MCF 10A (cell line): ENCODE measurements at regions of chr18 and their contacts with region 1.

Region 1: DNA sequence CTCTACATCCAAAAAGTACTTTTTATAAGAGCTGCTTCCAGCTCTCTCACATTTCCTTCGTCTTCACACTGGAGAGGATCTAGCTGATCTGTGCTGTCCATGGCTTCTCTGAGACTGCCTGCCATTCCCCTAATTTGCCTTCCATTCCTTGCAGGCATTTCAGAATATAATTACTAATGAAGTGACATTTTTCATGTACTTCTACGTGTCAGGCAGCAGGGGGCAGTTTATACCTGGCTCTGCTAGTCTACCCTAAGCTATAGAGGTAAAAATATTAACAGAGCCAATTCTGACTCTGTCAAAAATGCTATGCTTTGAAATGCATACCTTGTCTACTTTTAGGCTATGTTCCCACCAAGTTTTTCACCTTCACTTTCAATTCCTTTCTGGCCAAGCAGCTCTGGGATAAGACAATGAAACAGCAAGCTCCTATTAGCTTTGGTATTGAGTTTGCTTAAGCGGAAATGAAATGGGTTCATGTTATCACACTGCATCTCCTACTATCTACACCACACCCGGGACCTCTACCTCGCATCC is 81.9 kb downstream of the MEP1B start:
- DNase-seq: peak; percentile 57
- H3K4me3 Mint-ChIP-seq: no peak overlapping the region
- H3K27ac Mint-ChIP-seq: no peak overlapping the region
- H3K4me1 Mint-ChIP-seq: peaks cover 12% of the 10 kb centered on the region
- H3K27me3 Mint-ChIP-seq: no peaks in the 10 kb centered on the region
- CTCF ChIP-seq: peak; percentile 76

Region 2: GRCh38 chr18:32158108-32158624 is 113.6 kb before region 1 on chr18:
- CTCF ChIA-PET with region 1: interaction called, 80 read pairs
- POLR2A ChIA-PET with region 1: no interaction called
- intact Hi-C with region 1: loop called (anchors 2 kb)
- DNase-seq: peak; percentile 92
- H3K4me3 Mint-ChIP-seq: no peak overlapping the region
- H3K27ac Mint-ChIP-seq: no peak overlapping the region
- H3K4me1 Mint-ChIP-seq: peaks cover 4% of the 10 kb centered on the region
- H3K27me3 Mint-ChIP-seq: no peaks in the 10 kb centered on the region
- CTCF ChIP-seq: peak; percentile 76

Region 3: GRCh38 chr18:32295604-32296003 is 23.9 kb after region 1 on chr18:
- CTCF ChIA-PET with region 1: interaction called, 100 read pairs
- POLR2A ChIA-PET with region 1: interaction called, 3 read pairs
- intact Hi-C with region 1: no loop called
- DNase-seq: no peak
- H3K4me3 Mint-ChIP-seq: no peak overlapping the region
- H3K27ac Mint-ChIP-seq: no peak overlapping the region
- H3K4me1 Mint-ChIP-seq: peaks cover 18% of the 10 kb centered on the region
- H3K27me3 Mint-ChIP-seq: no peaks in the 10 kb centered on the region
- CTCF ChIP-seq: no peak

Region 4: GRCh38 chr18:32373995-32374394 is 102.3 kb after region 1 on chr18:
- CTCF ChIA-PET with region 1: interaction called, 17 read pairs
- POLR2A ChIA-PET with region 1: interaction called, 3 read pairs
- intact Hi-C with region 1: no loop called
- DNase-seq: peak; percentile 73
- H3K4me3 Mint-ChIP-seq: no peak overlapping the region
- H3K27ac Mint-ChIP-seq: peak overlapping the region; percentile 98
- H3K4me1 Mint-ChIP-seq: peaks cover 45% of the 10 kb centered on the region
- H3K27me3 Mint-ChIP-seq: no peaks in the 10 kb centered on the region
- CTCF ChIP-seq: no peak

Region 5: DNA sequence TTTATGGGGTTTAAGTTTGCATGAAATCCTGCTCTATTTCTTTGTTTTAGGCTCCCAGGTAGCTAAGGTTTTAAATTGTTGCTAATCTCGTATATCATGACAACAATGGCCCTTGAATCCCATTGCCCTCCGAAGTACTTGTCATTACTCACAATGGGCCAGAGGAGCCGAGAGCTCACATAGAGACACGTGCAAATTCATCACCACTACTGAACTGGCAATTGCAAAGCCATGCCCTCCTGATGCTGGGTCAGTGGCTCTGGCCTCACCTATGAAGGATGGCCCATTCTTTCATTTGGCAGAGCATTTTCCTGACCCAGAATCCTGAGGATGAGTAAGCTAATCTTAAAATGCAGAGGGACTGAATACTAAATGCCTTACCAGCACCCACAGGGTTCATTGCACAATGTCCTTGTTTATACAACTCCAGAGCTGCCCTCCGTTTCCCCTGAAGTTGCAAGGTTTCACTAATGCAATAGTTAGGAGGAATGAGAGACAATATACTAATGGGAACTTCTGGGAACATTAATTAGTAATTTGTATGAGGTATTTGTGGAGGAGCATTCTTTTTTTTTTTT is 270.6 kb after region 1 on chr18:
- CTCF ChIA-PET with region 1: interaction called, 171 read pairs
- POLR2A ChIA-PET with region 1: no interaction called
- intact Hi-C with region 1: no loop called
- DNase-seq: peak; percentile 93
- H3K4me3 Mint-ChIP-seq: peak overlapping the region; percentile 62
- H3K27ac Mint-ChIP-seq: peak overlapping the region; percentile 17
- H3K4me1 Mint-ChIP-seq: peaks cover 29% of the 10 kb centered on the region
- H3K27me3 Mint-ChIP-seq: no peaks in the 10 kb centered on the region
- CTCF ChIP-seq: no peak

Region 6: GRCh38 chr18:32566960-32567359 is 295.2 kb after region 1 on chr18:
- CTCF ChIA-PET with region 1: interaction called, 10 read pairs
- POLR2A ChIA-PET with region 1: no interaction called
- intact Hi-C with region 1: no loop called
- DNase-seq: peak; percentile 59
- H3K4me3 Mint-ChIP-seq: no peak overlapping the region
- H3K27ac Mint-ChIP-seq: no peak overlapping the region
- H3K4me1 Mint-ChIP-seq: no peaks in the 10 kb centered on the region
- H3K27me3 Mint-ChIP-seq: no peaks in the 10 kb centered on the region
- CTCF ChIP-seq: no peak